ENCODE measurements at regions of chr10 and their contacts with region 1.

Region 1: GRCh38 chr10:17430647-17431355 is 23.6 kb downstream of the ST8SIA6 start:
- DNase-seq: peak in 8 of 9 experiments; percentile 42 to 80 (median 72)
- ATAC-seq: no peak
- H3K4me3 ChIP-seq: no peak overlapping the region
- H3K4me3 Mint-ChIP-seq: no peak overlapping the region
- H3K27ac ChIP-seq: no peak overlapping the region
- H3K27ac Mint-ChIP-seq: no peak overlapping the region
- H3K4me1 ChIP-seq: peaks cover 49% of the 10 kb centered on the region
- H3K4me1 Mint-ChIP-seq: peaks cover 50% of the 10 kb centered on the region
- H3K27me3 ChIP-seq: no peaks in the 10 kb centered on the region
- H3K27me3 Mint-ChIP-seq: peaks cover 2% of the 10 kb centered on the region
- CTCF ChIP-seq: peak; percentile 95

Region 2: DNA sequence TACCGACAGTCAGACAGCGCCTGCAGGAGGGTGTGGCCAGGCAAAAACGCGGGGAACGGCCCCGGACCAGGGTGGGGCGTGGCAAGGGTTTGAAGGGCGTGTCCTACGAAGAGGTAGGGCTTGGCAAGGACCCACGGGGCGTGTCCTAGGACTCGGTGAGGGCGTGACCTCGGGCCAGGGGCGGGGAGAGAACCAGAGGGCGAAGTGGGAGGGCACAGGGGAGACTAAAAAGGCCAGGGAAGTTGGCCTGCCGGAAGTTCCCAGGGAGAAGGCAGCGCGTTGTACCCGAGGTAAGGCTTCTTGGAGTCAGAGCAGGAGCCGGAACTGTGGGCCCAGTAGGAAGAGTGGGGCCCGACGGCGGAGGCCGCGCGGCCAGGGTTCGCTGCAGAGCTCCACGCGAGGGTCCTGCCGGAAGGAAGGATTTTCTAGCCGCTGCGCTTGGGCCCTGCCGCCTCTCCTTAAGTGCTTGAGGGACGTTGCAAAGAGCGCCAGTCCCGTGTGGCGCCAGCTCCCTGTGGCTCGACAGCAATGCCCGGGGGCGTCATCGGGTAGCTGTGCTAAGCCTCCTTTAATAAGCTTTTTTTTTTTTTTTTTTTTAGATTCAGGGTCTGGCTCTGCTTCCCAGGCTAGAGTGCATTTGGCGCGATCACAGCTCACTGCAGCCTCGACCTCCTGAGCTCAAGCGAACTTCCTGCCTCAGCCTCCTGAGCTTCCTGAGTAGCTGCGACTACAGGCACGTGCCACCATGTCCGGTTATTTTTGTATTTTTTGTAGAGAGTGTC is 993.9 kb before region 1 on chr10 and contains the start of gene PTER:
- CTCF ChIA-PET with region 1: no interaction called
- POLR2A ChIA-PET with region 1: no interaction called
- intact Hi-C with region 1: loop called in 1 of 2 experiments (anchors 5 kb)
- DNase-seq: peak; percentile 93 to 99 (median 96)
- ATAC-seq: peak; percentile 99
- H3K4me3 ChIP-seq: peak within 1 kb of the TSS; percentile 77 to 79
- H3K4me3 Mint-ChIP-seq: peak within 1 kb of the TSS; percentile 88
- H3K27ac ChIP-seq: peak within 1 kb of the TSS; percentile 61 to 77
- H3K27ac Mint-ChIP-seq: peak within 1 kb of the TSS; percentile 84
- H3K4me1 ChIP-seq: peaks cover 31% of the 10 kb centered on the region
- H3K4me1 Mint-ChIP-seq: peaks cover 51% of the 10 kb centered on the region
- H3K27me3 ChIP-seq: no peaks in the 10 kb centered on the region
- H3K27me3 Mint-ChIP-seq: no peaks in the 10 kb centered on the region
- CTCF ChIP-seq: no peak
- total RNA-seq, gene PTER: 6.4 TPM

Region 3: GRCh38 chr10:16527452-16527851 is 903.3 kb before region 1 on chr10:
- CTCF ChIA-PET with region 1: no interaction called
- POLR2A ChIA-PET with region 1: no interaction called
- intact Hi-C with region 1: no loop called
- DNase-seq: no peak
- ATAC-seq: no peak
- H3K4me3 ChIP-seq: no peak overlapping the region
- H3K4me3 Mint-ChIP-seq: no peak overlapping the region
- H3K27ac ChIP-seq: no peak overlapping the region
- H3K27ac Mint-ChIP-seq: no peak overlapping the region
- H3K4me1 ChIP-seq: no peaks in the 10 kb centered on the region
- H3K4me1 Mint-ChIP-seq: no peaks in the 10 kb centered on the region
- H3K27me3 ChIP-seq: peaks cover 0 to 3% of the 10 kb centered on the region in 2 experiments
- H3K27me3 Mint-ChIP-seq: peaks cover 16% of the 10 kb centered on the region
- CTCF ChIP-seq: no peak

Region 4: GRCh38 chr10:16843252-16843870 is 587.4 kb before region 1 on chr10:
- CTCF ChIA-PET with region 1: interaction called, 5 read pairs
- POLR2A ChIA-PET with region 1: no interaction called
- intact Hi-C with region 1: loop called (anchors 2 kb)
- DNase-seq: peak in 3 of 9 experiments; percentile 16 to 78 (median 63)
- ATAC-seq: peak; percentile 51
- H3K4me3 ChIP-seq: no peak overlapping the region
- H3K4me3 Mint-ChIP-seq: no peak overlapping the region
- H3K27ac ChIP-seq: no peak overlapping the region
- H3K27ac Mint-ChIP-seq: no peak overlapping the region
- H3K4me1 ChIP-seq: no peaks in the 10 kb centered on the region
- H3K4me1 Mint-ChIP-seq: no peaks in the 10 kb centered on the region
- H3K27me3 ChIP-seq: no peaks in the 10 kb centered on the region
- H3K27me3 Mint-ChIP-seq: no peaks in the 10 kb centered on the region
- CTCF ChIP-seq: peak; percentile 72

Region 5: GRCh38 chr10:17088118-17088806 is 342.5 kb before region 1 on chr10:
- CTCF ChIA-PET with region 1: no interaction called
- POLR2A ChIA-PET with region 1: no interaction called
- intact Hi-C with region 1: no loop called
- DNase-seq: no peak
- ATAC-seq: no peak
- H3K4me3 ChIP-seq: no peak overlapping the region
- H3K4me3 Mint-ChIP-seq: no peak overlapping the region
- H3K27ac ChIP-seq: no peak overlapping the region
- H3K27ac Mint-ChIP-seq: no peak overlapping the region
- H3K4me1 ChIP-seq: no peaks in the 10 kb centered on the region
- H3K4me1 Mint-ChIP-seq: no peaks in the 10 kb centered on the region
- H3K27me3 ChIP-seq: no peaks in the 10 kb centered on the region
- H3K27me3 Mint-ChIP-seq: no peaks in the 10 kb centered on the region
- CTCF ChIP-seq: no peak

Region 6: GRCh38 chr10:17290226-17290625 is 140.6 kb before region 1 on chr10:
- CTCF ChIA-PET with region 1: interaction called, 12 read pairs
- POLR2A ChIA-PET with region 1: no interaction called
- intact Hi-C with region 1: loop called (anchors 1 kb)
- DNase-seq: peak in 2 of 9 experiments; percentile 24 to 47
- ATAC-seq: no peak
- H3K4me3 ChIP-seq: no peak overlapping the region
- H3K4me3 Mint-ChIP-seq: no peak overlapping the region
- H3K27ac ChIP-seq: no peak overlapping the region
- H3K27ac Mint-ChIP-seq: no peak overlapping the region
- H3K4me1 ChIP-seq: no peaks in the 10 kb centered on the region
- H3K4me1 Mint-ChIP-seq: peaks cover 4% of the 10 kb centered on the region
- H3K27me3 ChIP-seq: no peaks in the 10 kb centered on the region
- H3K27me3 Mint-ChIP-seq: peaks cover 18% of the 10 kb centered on the region
- CTCF ChIP-seq: no peak

Region 7: GRCh38 chr10:17443707-17444387 is 13.0 kb after region 1 on chr10:
- CTCF ChIA-PET with region 1: interaction called, 12 read pairs
- POLR2A ChIA-PET with region 1: interaction called, 3 read pairs
- intact Hi-C with region 1: no loop called
- DNase-seq: peak in 2 of 9 experiments; percentile 62 to 74
- ATAC-seq: peak; percentile 79
- H3K4me3 ChIP-seq: peak overlapping the region in 1 of 2 experiments; percentile 1
- H3K4me3 Mint-ChIP-seq: no peak overlapping the region
- H3K27ac ChIP-seq: peak overlapping the region in 1 of 2 experiments; percentile 40
- H3K27ac Mint-ChIP-seq: no peak overlapping the region
- H3K4me1 ChIP-seq: peaks cover 3% of the 10 kb centered on the region
- H3K4me1 Mint-ChIP-seq: peaks cover 8% of the 10 kb centered on the region
- H3K27me3 ChIP-seq: no peaks in the 10 kb centered on the region
- H3K27me3 Mint-ChIP-seq: peaks cover 30% of the 10 kb centered on the region
- CTCF ChIP-seq: no peak

Region 8: GRCh38 chr10:18233775-18234174 is 803.0 kb after region 1 on chr10:
- CTCF ChIA-PET with region 1: no interaction called
- POLR2A ChIA-PET with region 1: no interaction called
- intact Hi-C with region 1: no loop called
- DNase-seq: no peak
- ATAC-seq: no peak
- H3K4me3 ChIP-seq: no peak overlapping the region
- H3K4me3 Mint-ChIP-seq: no peak overlapping the region
- H3K27ac ChIP-seq: no peak overlapping the region
- H3K27ac Mint-ChIP-seq: no peak overlapping the region
- H3K4me1 ChIP-seq: no peaks in the 10 kb centered on the region
- H3K4me1 Mint-ChIP-seq: no peaks in the 10 kb centered on the region
- H3K27me3 ChIP-seq: no peaks in the 10 kb centered on the region
- H3K27me3 Mint-ChIP-seq: peaks cover 2% of the 10 kb centered on the region
- CTCF ChIP-seq: no peak

Measured in CD8-positive, alpha-beta T cell (primary cell).